ENCODE measurements at regions of chr12 and their contacts with region 1.

Region 1: GRCh38 chr12:31362759-31363415 is 36.9 kb upstream of the SINHCAF start:
- DNase-seq: peak; percentile 47
- H3K4me3 Mint-ChIP-seq: peak overlapping the region; percentile 56
- H3K27ac Mint-ChIP-seq: peak overlapping the region; percentile 87
- H3K4me1 Mint-ChIP-seq: peaks cover 21% of the 10 kb centered on the region
- H3K27me3 Mint-ChIP-seq: no peaks in the 10 kb centered on the region

Region 2: GRCh38 chr12:31306621-31307265 is 56.1 kb before region 1 on chr12:
- CTCF ChIA-PET with region 1: no interaction called
- POLR2A ChIA-PET with region 1: no interaction called
- DNase-seq: no peak
- H3K4me3 Mint-ChIP-seq: no peak overlapping the region
- H3K27ac Mint-ChIP-seq: no peak overlapping the region
- H3K4me1 Mint-ChIP-seq: peaks cover 14% of the 10 kb centered on the region
- H3K27me3 Mint-ChIP-seq: no peaks in the 10 kb centered on the region

Region 3: DNA sequence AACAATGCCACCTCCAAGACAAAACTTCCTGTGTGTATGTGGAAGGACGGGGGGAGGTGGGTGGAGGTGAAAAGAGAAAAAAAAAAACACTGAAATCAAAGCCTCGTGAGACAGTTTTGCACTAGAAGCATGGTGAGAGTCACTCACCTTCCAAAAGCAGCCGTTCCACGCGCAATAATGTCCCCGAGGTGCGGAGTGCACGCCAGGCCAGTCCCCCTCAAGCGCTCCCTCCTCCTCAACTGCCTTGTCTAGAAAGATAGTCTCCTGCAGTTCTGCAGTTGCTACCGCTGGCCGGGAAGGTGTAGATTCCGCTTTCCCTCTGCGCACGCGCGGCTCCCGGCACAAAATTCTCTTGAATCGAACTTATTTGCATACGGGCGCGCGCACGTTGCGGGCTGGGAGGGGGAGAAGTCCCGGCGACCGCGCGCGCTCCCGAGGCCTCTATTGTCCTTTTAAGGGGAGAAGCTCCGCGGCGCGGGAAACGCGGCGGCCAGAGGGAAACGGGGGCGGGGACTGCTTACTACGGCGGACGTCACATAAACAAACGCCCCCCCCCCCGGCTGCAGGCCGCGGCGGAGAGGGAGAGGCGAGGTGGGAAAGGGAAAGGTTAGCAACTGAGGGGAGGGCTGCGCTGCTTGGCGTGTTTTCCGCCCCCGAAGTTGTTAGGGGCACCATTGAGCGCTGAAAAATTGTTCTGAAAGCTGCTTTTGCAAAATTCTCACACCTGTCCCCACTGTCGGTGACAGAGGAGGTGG is 36.8 kb before region 1 on chr12 and contains the start of gene SINHCAF:
- CTCF ChIA-PET with region 1: no interaction called
- POLR2A ChIA-PET with region 1: interaction called, 13 read pairs
- DNase-seq: peak; percentile 99
- H3K4me3 Mint-ChIP-seq: peak within 1 kb of the TSS; percentile 82
- H3K27ac Mint-ChIP-seq: peak within 1 kb of the TSS; percentile 95
- H3K4me1 Mint-ChIP-seq: peaks cover 27% of the 10 kb centered on the region
- H3K27me3 Mint-ChIP-seq: peaks cover 4% of the 10 kb centered on the region
- total RNA-seq, gene SINHCAF: 107 to 123 TPM